ENCODE measurements at regions of chr1 and their contacts with region 1.

Region 1: GRCh38 chr1:156319664-156320063 is 18.4 kb downstream of the CCT3 start:
- DNase-seq: peak; percentile 34
- ATAC-seq: 0 out of 2 replicates have a peak, but pooled peaks have one; percentile 8
- H3K4me3 ChIP-seq: no peak overlapping the region
- H3K27ac ChIP-seq: no peak overlapping the region
- H3K4me1 ChIP-seq: peaks cover 6% of the 10 kb centered on the region
- H3K27me3 ChIP-seq: no peaks in the 10 kb centered on the region
- CTCF ChIP-seq: peak; percentile 63
- POLR2A ChIP-seq: no peak
- RAD21 ChIP-seq: peak; percentile 63

Region 2: GRCh38 chr1:156096640-156097391 is 222.8 kb before region 1 on chr1:
- CTCF ChIA-PET with region 1: no interaction called
- POLR2A ChIA-PET with region 1: no interaction called
- dilution Hi-C with region 1: no loop called
- in situ Hi-C with region 1: loop called (anchors 5 kb)
- intact Hi-C with region 1: loop called (anchors 10 kb)
- DNase-seq: peak; percentile 78
- ATAC-seq: peak; percentile 99
- H3K4me3 ChIP-seq: no peak overlapping the region
- H3K27ac ChIP-seq: peak overlapping the region; percentile 73
- H3K4me1 ChIP-seq: peaks cover 9% of the 10 kb centered on the region
- H3K27me3 ChIP-seq: no peaks in the 10 kb centered on the region
- CTCF ChIP-seq: peak; percentile 98
- POLR2A ChIP-seq: peak; percentile 43; the same call in 1 of the 2 replicates
- RAD21 ChIP-seq: peak; percentile 97

Region 3: DNA sequence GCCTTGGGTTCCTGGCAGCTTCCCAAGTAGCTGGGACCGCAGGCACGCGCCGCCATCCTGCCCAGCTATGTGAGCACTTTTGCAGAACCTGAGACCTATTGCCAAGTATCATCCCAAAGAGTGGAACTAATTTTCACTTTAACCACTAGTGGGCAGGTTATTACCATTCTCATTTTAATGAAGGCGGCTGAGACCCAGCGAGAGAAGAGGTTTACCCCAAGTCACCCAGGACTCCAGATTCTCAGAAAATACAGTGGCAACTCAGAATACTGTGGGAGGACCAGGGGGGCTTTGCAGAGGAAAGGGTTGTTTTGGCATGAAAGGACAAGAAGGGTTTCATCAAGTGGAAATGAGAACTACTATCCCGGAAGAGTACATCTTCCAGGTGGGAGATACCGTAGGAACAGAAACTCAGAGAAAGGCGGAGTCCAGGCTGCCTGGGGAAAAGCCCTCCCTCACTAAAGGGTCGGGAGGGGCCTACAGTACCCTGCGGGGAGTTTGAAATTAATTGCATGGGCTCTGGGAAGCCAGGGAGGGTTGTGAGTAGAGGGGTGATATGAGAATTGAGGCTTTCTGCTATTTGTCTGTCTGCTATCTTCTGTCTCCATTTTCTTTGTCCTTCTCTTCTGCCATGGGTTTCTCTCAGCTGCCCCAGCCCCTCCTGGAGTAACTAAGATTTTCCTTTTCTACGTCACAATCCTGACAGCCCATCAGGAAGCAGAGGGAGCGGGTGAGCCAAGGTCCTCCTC is 173.5 kb before region 1 on chr1:
- CTCF ChIA-PET with region 1: no interaction called
- POLR2A ChIA-PET with region 1: no interaction called
- dilution Hi-C with region 1: no loop called
- in situ Hi-C with region 1: no loop called
- intact Hi-C with region 1: loop called (anchors 1 kb)
- DNase-seq: peak; percentile 94
- ATAC-seq: peak; percentile 74
- H3K4me3 ChIP-seq: no peak overlapping the region
- H3K27ac ChIP-seq: no peak overlapping the region
- H3K4me1 ChIP-seq: peaks cover 11% of the 10 kb centered on the region; the same call in 1 of the 2 replicates
- H3K27me3 ChIP-seq: peaks cover 14% of the 10 kb centered on the region; the same call in 1 of the 2 replicates
- CTCF ChIP-seq: peak; percentile 78
- POLR2A ChIP-seq: peak; percentile 57; the same call in 1 of the 2 replicates
- RAD21 ChIP-seq: peak; percentile 80

Region 4: GRCh38 chr1:156268336-156268735 is 51.3 kb before region 1 on chr1:
- CTCF ChIA-PET with region 1: no interaction called
- POLR2A ChIA-PET with region 1: no interaction called
- dilution Hi-C with region 1: no loop called
- in situ Hi-C with region 1: no loop called
- intact Hi-C with region 1: loop called (anchors 5 kb)
- DNase-seq: peak; percentile 69
- ATAC-seq: peak; percentile 90
- H3K4me3 ChIP-seq: no peak overlapping the region
- H3K27ac ChIP-seq: no peak overlapping the region
- H3K4me1 ChIP-seq: peaks cover 3% of the 10 kb centered on the region
- H3K27me3 ChIP-seq: no peaks in the 10 kb centered on the region
- CTCF ChIP-seq: no peak
- POLR2A ChIP-seq: no peak
- RAD21 ChIP-seq: no peak

Measured in IMR-90 (cell line).